ENCODE measurements at regions of chr16 and their contacts with region 1.

Region 1: DNA sequence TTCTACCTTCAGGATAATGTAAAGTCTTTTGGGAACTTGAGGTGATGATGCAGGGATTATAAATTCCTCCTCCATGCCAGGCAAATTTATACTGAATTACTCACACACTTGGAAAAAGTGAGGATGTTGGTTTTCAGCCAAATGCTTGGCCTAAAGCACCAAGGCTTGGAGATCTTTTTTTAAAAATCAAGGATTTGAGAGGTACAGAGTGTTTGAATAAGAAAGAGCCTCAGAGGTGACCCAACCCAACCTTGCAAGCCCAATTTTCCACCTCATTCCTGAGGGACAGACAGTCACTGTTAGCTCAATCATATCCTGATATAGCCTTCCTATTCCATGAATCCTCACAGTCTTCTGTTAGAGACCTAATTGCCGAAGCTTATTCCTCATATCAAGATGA is 14.0 kb downstream of the GRIN2A start:
- DNase-seq: no peak
- H3K4me3 ChIP-seq: no peak overlapping the region
- H3K27ac ChIP-seq: no peak overlapping the region
- H3K4me1 ChIP-seq: no peaks in the 10 kb centered on the region
- H3K27me3 ChIP-seq: no peaks in the 10 kb centered on the region
- CTCF ChIP-seq: no peak
- EP300 ChIP-seq: no peak
- POLR2A ChIP-seq: no peak

Region 2: DNA sequence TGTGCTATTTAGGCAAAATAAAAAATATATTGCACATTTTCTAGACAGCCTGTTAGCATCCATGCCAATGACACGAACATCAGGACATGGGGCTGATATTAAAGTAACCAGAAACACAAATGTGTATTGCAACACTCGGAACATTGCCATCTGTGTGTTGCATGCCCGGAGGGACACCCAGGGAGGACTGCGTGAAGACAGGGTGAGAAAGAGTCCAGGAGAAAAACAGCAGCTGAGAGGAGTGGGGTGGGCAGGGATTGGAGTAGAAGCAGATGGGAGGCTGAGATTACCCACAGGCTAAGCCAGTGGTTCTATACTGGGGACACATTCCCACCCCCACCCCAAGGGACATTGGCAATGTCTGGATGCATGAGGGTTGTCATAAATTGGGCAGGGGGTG is 100.9 kb before region 1 on chr16:
- intact Hi-C with region 1: no loop called
- DNase-seq: no peak
- H3K4me3 ChIP-seq: no peak overlapping the region
- H3K27ac ChIP-seq: no peak overlapping the region
- H3K4me1 ChIP-seq: peaks cover 2% of the 10 kb centered on the region
- H3K27me3 ChIP-seq: no peaks in the 10 kb centered on the region
- CTCF ChIP-seq: no peak
- EP300 ChIP-seq: no peak
- POLR2A ChIP-seq: no peak

Region 3: DNA sequence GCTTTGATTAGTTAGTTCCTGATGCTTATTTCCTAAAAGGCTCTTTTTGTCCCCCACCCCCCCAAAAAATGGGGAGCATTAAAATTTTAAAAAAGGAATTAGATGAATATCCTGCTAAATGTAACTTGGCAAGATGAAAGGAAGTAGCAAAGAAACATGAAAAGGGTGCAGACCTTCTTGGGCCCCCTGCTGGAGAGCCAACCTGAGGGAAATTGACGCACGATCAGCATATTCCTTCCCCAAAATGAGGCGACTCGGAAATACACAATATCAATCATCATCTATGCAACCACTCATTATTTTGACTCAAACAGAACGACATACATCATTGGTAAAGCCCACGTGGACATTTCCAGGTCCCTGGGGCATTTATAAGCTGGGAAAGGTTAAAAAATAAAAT is 45.7 kb before region 1 on chr16:
- intact Hi-C with region 1: loop called in 1 of 4 experiments (anchors 5 kb)
- DNase-seq: no peak
- H3K4me3 ChIP-seq: no peak overlapping the region
- H3K27ac ChIP-seq: no peak overlapping the region
- H3K4me1 ChIP-seq: peaks cover 6% of the 10 kb centered on the region
- H3K27me3 ChIP-seq: no peaks in the 10 kb centered on the region
- CTCF ChIP-seq: no peak
- EP300 ChIP-seq: no peak
- POLR2A ChIP-seq: no peak